Thyroid gland (tissue), 4 donors: ENCODE measurements at regions of chr11 and their contacts with region 1.

Region 1: GRCh38 chr11:124409906-124410305 is 11.1 kb upstream of the OR8B3 start:
- DNase-seq: no peak
- H3K4me3 ChIP-seq: no peak overlapping the region
- H3K27ac ChIP-seq: no peak overlapping the region
- H3K4me1 ChIP-seq: no peaks in the 10 kb centered on the region
- H3K27me3 ChIP-seq: no peaks in the 10 kb centered on the region
- CTCF ChIP-seq: no peak
- POLR2A ChIP-seq: no peak

Region 2: DNA sequence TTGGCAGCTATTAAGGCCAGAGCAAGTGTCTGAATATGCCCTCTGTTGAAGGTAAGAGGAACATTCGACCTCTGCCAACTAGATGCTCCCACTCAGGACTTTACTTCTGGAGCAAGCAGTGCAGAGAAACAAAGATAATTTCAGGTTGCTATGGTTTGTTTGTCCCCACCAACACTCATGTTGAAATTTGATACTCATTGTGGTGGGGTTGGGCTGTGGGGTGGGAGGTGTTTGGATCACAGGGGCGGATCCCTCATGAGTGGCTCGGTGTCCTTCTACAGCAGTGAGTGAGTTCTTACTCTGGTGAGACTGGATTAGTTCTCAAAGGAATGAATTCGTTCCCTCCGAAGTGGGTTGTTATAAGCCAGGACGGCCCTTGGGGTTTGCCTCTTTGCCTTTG is 171.9 kb after region 1 on chr11:
- intact Hi-C with region 1: loop called (anchors 5 kb)
- DNase-seq: peak; percentile 53 to 54
- H3K4me3 ChIP-seq: no peak overlapping the region
- H3K27ac ChIP-seq: no peak overlapping the region
- H3K4me1 ChIP-seq: peaks cover 0 to 13% of the 10 kb centered on the region in 2 donors
- H3K27me3 ChIP-seq: no peaks in the 10 kb centered on the region
- CTCF ChIP-seq: no peak
- POLR2A ChIP-seq: no peak